ENCODE measurements at regions of chr2 and their contacts with region 1.

Region 1: GRCh38 chr2:172806493-172806892 is 70.8 kb downstream of the RAPGEF4 start:
- DNase-seq: no peak
- ATAC-seq: no peak
- H3K4me3 Mint-ChIP-seq: no peak overlapping the region
- H3K27ac Mint-ChIP-seq: no peak overlapping the region
- H3K4me1 Mint-ChIP-seq: no peaks in the 10 kb centered on the region
- H3K27me3 Mint-ChIP-seq: peaks cover 3% of the 10 kb centered on the region

Region 2: DNA sequence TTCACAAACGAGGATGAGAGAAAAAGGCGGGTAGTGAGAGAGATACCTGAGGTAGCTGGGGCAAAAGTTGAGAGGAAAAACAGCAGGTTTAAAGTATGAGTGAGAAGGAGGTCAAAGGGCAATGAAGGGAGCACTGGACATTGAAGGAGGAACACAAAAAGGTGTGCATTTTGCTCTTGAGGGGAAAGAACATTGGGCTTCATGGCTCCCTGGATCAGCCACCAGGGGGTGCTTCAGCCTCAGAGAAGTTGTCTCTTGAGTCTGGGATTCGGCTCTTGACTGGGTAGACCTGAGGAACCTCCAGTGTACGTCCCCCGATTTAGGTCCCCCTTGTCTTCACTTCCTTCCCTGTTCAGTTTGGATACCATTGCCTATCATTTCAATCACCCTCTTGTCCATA is 57.7 kb after region 1 on chr2:
- CTCF ChIA-PET with region 1: interaction called, 3 read pairs
- POLR2A ChIA-PET with region 1: no interaction called
- intact Hi-C with region 1: loop called in 1 of 2 experiments (anchors 2 kb)
- DNase-seq: peak; percentile 79
- ATAC-seq: peak; percentile 36
- H3K4me3 Mint-ChIP-seq: no peak overlapping the region
- H3K27ac Mint-ChIP-seq: no peak overlapping the region
- H3K4me1 Mint-ChIP-seq: no peaks in the 10 kb centered on the region
- H3K27me3 Mint-ChIP-seq: peaks cover 5% of the 10 kb centered on the region

Region 3: GRCh38 chr2:173021939-173022371 is 215.5 kb after region 1 on chr2:
- CTCF ChIA-PET with region 1: interaction called, 3 read pairs
- POLR2A ChIA-PET with region 1: no interaction called
- intact Hi-C with region 1: loop called in 1 of 2 experiments (anchors 5 kb)
- DNase-seq: peak; percentile 6
- ATAC-seq: no peak
- H3K4me3 Mint-ChIP-seq: no peak overlapping the region
- H3K27ac Mint-ChIP-seq: no peak overlapping the region
- H3K4me1 Mint-ChIP-seq: no peaks in the 10 kb centered on the region
- H3K27me3 Mint-ChIP-seq: peaks cover 2% of the 10 kb centered on the region

Region 4: GRCh38 chr2:173205375-173205774 is 398.9 kb after region 1 on chr2:
- CTCF ChIA-PET with region 1: no interaction called
- POLR2A ChIA-PET with region 1: no interaction called
- intact Hi-C with region 1: loop called (anchors 2 to 10 kb)
- DNase-seq: no peak
- ATAC-seq: no peak
- H3K4me3 Mint-ChIP-seq: no peak overlapping the region
- H3K27ac Mint-ChIP-seq: no peak overlapping the region
- H3K4me1 Mint-ChIP-seq: no peaks in the 10 kb centered on the region
- H3K27me3 Mint-ChIP-seq: peaks cover 6% of the 10 kb centered on the region

Region 5: GRCh38 chr2:173210270-173211196 is 404.0 kb after region 1 on chr2:
- CTCF ChIA-PET with region 1: no interaction called
- POLR2A ChIA-PET with region 1: no interaction called
- intact Hi-C with region 1: loop called (anchors 2 to 10 kb)
- DNase-seq: peak; percentile 70
- ATAC-seq: peak; percentile 65
- H3K4me3 Mint-ChIP-seq: no peak overlapping the region
- H3K27ac Mint-ChIP-seq: no peak overlapping the region
- H3K4me1 Mint-ChIP-seq: no peaks in the 10 kb centered on the region
- H3K27me3 Mint-ChIP-seq: peaks cover 9% of the 10 kb centered on the region

Measured in activated CD4-positive, alpha-beta T cell treated with anti-CD3 and anti-CD28 coated beads for 36 hours (primary cell).